Testis (tissue), 5 donors: ENCODE measurements at regions of chr6 and their contacts with region 1.

Region 1: DNA sequence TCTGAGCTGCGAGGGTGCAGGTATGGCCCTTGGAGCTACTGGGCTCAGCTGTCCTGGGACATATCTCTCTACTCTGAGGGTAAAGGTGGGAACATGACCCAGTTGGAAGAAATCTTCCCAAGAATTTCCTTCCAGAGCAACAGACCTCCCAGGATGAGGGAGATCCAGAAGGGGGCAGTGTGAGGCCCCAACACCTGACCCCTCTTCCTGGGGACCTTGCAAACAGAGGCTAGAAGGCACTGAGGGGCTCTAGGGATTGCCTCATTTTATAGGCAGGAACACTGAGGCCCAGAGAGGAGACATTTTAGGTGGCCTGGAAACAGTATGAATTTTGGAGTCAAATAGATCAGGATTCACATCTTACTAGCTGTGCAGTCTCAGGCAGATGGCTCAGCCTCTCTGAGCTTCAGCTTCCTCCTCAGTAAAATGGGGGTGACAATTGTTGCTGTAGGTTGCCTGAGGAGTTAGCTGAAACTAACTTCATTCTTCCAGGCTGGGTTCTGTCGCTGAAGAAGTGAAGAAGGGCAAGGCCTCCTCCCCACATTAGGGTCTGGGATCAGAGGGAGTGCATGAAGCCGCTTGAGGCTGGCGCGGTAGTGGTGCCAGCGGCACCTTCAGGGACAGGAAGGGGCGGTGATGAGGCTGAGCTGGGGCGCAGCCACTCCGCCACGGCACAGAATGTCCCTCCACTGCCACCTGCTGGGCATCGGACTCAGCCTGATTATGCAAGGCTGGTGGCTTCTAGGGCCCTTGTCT is 11.4 kb downstream of the KCNK17 start:
- DNase-seq: peak; percentile 87
- H3K4me3 ChIP-seq: no peak overlapping the region
- H3K27ac ChIP-seq: no peak overlapping the region
- H3K4me1 ChIP-seq: no peaks in the 10 kb centered on the region
- H3K27me3 ChIP-seq: no peaks in the 10 kb centered on the region
- CTCF ChIP-seq: peak; percentile 55 to 80 (median 72)
- POLR2A ChIP-seq: no peak

Region 2: DNA sequence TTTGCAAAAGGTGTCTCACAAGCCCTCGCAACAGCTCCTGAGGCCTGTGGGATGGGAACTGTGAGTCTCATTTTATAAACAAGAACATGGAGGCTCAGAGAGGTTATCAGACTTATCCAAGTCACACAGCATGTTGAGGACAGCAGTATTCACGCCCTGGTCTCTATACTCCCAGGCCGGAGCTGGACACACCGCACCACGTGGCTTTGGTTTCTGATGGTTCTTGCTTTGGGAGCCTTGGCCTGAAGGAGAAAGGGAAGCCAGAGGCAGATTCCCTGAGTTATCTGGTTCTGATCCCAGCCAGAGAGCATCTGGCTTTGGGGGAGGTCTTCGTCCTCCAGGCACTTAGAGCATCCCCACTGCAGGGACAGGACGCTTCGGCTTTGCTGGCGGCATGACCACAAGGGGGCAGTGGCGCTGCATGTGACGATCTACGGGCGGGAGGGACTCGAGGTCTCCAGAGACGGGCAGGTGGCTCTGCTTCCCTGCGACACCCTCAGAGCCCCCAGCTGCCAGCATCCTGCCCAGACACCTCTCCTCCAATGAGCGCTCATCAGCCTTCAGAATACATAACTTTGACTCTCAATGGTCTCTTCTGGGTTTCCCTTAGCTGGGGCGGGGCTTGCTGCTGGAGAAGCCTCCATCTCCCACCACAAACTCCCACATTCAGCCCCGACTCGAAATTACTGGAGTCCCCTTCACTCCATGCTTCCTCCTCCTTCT is 136.5 kb before region 1 on chr6:
- intact Hi-C with region 1: loop called (anchors 5 kb)
- DNase-seq: peak; percentile 84
- H3K4me3 ChIP-seq: no peak overlapping the region
- H3K27ac ChIP-seq: no peak overlapping the region
- H3K4me1 ChIP-seq: no peaks in the 10 kb centered on the region
- H3K27me3 ChIP-seq: no peaks in the 10 kb centered on the region
- CTCF ChIP-seq: peak; percentile 65 to 84 (median 75)
- POLR2A ChIP-seq: no peak

Region 3: GRCh38 chr6:39387785-39388184 is 84.9 kb after region 1 on chr6:
- intact Hi-C with region 1: no loop called
- DNase-seq: no peak
- H3K4me3 ChIP-seq: no peak overlapping the region
- H3K27ac ChIP-seq: no peak overlapping the region
- H3K4me1 ChIP-seq: no peaks in the 10 kb centered on the region
- H3K27me3 ChIP-seq: no peaks in the 10 kb centered on the region
- CTCF ChIP-seq: no peak
- POLR2A ChIP-seq: no peak